Posterior vena cava (tissue), 2 donors: ENCODE measurements at regions of chr14 and their contacts with region 1.

Region 1: DNA sequence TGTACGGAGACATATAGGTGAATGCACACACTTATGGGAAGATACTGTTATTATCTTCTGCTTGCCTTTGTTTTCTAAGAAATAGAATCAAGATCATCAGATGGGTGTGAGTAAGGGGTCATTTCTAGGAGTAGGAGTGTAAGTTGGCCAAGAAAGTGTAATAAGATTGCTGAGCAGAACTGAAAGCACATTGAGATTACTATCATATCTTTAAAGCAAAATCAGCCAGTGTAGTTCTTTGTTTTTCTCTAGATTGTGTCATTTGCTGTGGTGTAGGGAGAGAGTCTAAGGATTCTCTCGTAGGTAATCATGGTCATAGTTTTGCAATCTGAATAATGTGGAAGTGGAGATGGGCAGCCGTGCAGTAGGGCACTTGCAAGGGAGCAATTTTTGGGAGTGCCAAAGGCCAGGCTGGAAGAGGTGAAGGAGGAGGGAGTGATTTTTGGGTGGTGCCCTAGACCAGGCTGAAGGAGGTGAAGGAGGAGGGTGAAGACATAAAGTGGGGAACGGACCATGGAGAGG is 131.6 kb downstream of the RGS6 start:
- DNase-seq: no peak

Region 2: DNA sequence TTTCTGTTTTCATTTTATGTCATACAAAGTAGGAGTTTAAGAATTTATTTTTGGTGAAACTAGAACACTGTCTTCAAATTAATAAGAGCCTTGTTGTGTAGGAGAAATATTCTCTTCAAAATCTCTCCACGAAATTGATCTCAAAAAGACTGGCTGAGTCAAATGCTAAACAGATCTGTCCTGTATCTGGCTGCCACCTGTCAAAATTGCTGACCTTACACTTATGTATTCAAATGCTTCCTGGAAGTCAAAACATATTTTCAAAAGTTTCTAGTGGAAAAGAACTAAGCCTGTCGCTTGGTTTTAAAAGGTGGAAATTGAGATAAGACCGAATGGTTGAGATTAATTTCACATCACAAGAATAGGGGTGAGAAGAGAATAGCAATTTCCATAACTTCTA is 10.2 kb before region 1 on chr14:
- intact Hi-C with region 1: loop called in 1 of 2 experiments (anchors 1 kb)
- DNase-seq: no peak

Region 3: DNA sequence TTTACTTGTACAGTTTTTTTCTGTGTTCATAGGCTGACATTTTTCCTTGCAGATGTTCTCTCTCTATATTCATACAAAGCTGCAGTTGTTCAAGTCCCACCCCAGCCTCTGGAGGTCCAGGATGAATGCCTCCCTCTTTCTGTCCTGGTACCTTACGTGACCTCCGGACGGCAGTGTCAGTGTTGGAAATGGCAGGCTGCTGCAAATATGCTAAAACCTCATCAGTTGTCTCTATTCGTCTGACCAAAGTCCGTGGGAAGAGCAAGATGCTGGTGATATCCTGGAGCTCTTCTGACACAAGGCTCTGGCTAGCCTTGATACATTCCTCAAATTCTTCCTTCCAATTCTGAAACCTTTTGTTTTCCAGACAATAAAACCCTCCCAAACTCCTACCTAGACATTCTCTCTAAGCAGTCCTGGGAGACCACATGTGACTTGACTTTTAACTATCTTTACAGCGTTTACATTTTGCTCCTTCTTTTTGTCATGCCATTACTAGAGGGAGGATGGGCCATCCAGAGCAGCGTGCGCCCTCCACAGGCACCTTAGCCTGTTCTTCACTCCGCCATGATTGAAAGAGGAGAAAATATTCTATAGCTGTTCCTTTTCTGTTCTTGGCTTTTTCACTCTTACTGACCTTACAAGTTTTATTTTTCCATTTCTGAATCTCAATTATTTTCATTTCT is 12.0 kb after region 1 on chr14:
- intact Hi-C with region 1: no loop called
- DNase-seq: no peak